Left colon (tissue), 2 donors: ENCODE measurements at regions of chr9 and their contacts with region 1.

Region 1: GRCh38 chr9:89536145-89536574 is 38.2 kb upstream of the SEMA4D start:
- DNase-seq: no peak
- ATAC-seq: no peak

Region 2: GRCh38 chr9:89477811-89478630 is 58.1 kb before region 1 on chr9:
- intact Hi-C with region 1: loop called in 1 of 2 experiments (anchors 10 kb)
- DNase-seq: no peak
- ATAC-seq: peak; percentile 70

Region 3: GRCh38 chr9:89631384-89631783 is 95.2 kb after region 1 on chr9:
- intact Hi-C with region 1: no loop called
- DNase-seq: no peak
- ATAC-seq: no peak